ENCODE measurements at regions of chr13 and their contacts with region 1.

Region 1: DNA sequence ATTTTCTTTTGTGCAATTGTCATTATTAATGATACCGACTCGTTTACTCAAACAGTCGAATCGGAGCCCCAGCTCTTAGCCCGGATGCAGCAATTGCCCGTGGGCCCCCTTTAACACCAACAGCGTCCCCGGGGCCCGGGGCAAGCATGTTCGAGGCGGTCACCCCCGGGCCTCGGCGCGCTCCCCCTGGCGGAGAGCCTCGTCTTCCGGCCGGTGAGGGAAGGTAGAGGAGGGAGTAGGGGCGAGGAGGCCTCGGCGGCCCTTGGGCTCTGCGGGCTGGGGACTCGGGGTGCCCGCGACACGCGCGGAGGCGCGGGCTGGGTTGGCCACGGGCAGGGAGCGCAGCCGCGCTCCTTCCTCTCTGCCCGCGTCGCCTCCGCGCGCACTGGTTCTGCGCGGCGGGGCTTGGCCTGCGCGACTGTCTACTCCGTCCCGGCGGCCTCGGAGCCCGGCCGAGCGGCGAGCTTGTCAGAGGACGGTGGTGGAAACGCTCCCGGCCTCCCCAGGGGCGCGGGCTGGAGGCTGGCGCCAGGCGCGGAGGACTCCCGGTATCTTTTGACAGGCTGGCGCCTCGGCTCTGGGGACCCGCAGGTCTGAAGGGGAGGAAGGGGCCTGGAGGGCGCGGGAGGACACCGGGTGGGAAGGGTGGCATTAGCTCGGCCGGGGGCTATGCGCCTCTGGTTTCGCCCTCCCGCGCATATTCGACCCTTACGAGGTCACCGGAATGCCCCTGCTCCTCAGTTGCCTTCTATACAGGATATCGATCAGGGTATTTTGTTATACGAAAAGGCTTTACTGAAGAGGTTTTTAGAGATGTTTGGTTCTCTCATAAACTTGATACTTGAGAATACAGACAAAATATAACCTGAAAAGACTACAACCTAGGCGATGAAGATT is 1.5 kb downstream of the BIVM start:
- DNase-seq: peak; percentile 89 to 93
- ATAC-seq: peak; percentile 82 to 87 (median 85)
- H3K4me3 ChIP-seq: peak overlapping the region; percentile 90
- H3K27ac ChIP-seq: peak overlapping the region; percentile 96
- H3K4me1 ChIP-seq: peaks cover 30% of the 10 kb centered on the region
- H3K27me3 ChIP-seq: no peaks in the 10 kb centered on the region
- CTCF ChIP-seq: peak; percentile 79

Region 2: GRCh38 chr13:102596147-102597028 is 204.0 kb before region 1 on chr13 and contains the start of gene TPP2:
- intact Hi-C with region 1: loop called in 1 of 2 experiments (anchors 5 kb)
- DNase-seq: peak; percentile 100
- ATAC-seq: peak; percentile 97 to 99 (median 98)
- H3K4me3 ChIP-seq: peak within 1 kb of the TSS; percentile 97
- H3K27ac ChIP-seq: peak within 1 kb of the TSS; percentile 99
- H3K4me1 ChIP-seq: peaks cover 43% of the 10 kb centered on the region
- H3K27me3 ChIP-seq: no peaks in the 10 kb centered on the region
- CTCF ChIP-seq: no peak
- total RNA-seq, gene TPP2: 35.2 to 45.6 (median 42.7) TPM

Region 3: GRCh38 chr13:102773441-102774215 is 26.8 kb before region 1 on chr13 and contains the start of gene TEX30:
- intact Hi-C with region 1: loop called in 1 of 2 experiments (anchors 1 kb)
- DNase-seq: peak; percentile 88 to 92
- ATAC-seq: peak; percentile 99
- H3K4me3 ChIP-seq: peak within 1 kb of the TSS; percentile 95
- H3K27ac ChIP-seq: peak within 1 kb of the TSS; percentile 92
- H3K4me1 ChIP-seq: peaks cover 5% of the 10 kb centered on the region
- H3K27me3 ChIP-seq: no peaks in the 10 kb centered on the region
- CTCF ChIP-seq: no peak
- total RNA-seq, gene TEX30: 4.8 to 6.9 (median 6.4) TPM

Region 4: GRCh38 chr13:102812611-102813287 is 12.4 kb after region 1 on chr13:
- intact Hi-C with region 1: no loop called
- DNase-seq: no peak
- ATAC-seq: no peak
- H3K4me3 ChIP-seq: no peak overlapping the region
- H3K27ac ChIP-seq: no peak overlapping the region
- H3K4me1 ChIP-seq: peaks cover 28% of the 10 kb centered on the region
- H3K27me3 ChIP-seq: no peaks in the 10 kb centered on the region
- CTCF ChIP-seq: no peak

Region 5: GRCh38 chr13:102845630-102846260 is 45.4 kb after region 1 on chr13 and contains the start of gene ERCC5:
- intact Hi-C with region 1: loop called (anchors 5 kb)
- DNase-seq: peak; percentile 94 to 97
- ATAC-seq: peak; percentile 93 to 95 (median 94)
- H3K4me3 ChIP-seq: peak within 1 kb of the TSS; percentile 82
- H3K27ac ChIP-seq: peak within 1 kb of the TSS; percentile 94
- H3K4me1 ChIP-seq: peaks cover 9% of the 10 kb centered on the region
- H3K27me3 ChIP-seq: no peaks in the 10 kb centered on the region
- CTCF ChIP-seq: no peak
- total RNA-seq, gene ERCC5: 21.0 to 31.0 (median 27.4) TPM

Measured in psoas muscle (tissue), 8 donors.